MCF 10A (cell line): ENCODE measurements at regions of chr5 and their contacts with region 1.

Region 1: GRCh38 chr5:94968507-94969095 is 316.3 kb downstream of the MCTP1 start:
- DNase-seq: peak; percentile 71
- H3K4me3 Mint-ChIP-seq: no peak overlapping the region
- H3K27ac Mint-ChIP-seq: no peak overlapping the region
- H3K4me1 Mint-ChIP-seq: no peaks in the 10 kb centered on the region
- H3K27me3 Mint-ChIP-seq: no peaks in the 10 kb centered on the region
- CTCF ChIP-seq: peak; percentile 57

Region 2: GRCh38 chr5:94715671-94716211 is 252.9 kb before region 1 on chr5:
- CTCF ChIA-PET with region 1: no interaction called
- POLR2A ChIA-PET with region 1: no interaction called
- intact Hi-C with region 1: no loop called
- DNase-seq: no peak
- H3K4me3 Mint-ChIP-seq: no peak overlapping the region
- H3K27ac Mint-ChIP-seq: no peak overlapping the region
- H3K4me1 Mint-ChIP-seq: no peaks in the 10 kb centered on the region
- H3K27me3 Mint-ChIP-seq: no peaks in the 10 kb centered on the region
- CTCF ChIP-seq: no peak

Region 3: GRCh38 chr5:94884311-94884710 is 84.3 kb before region 1 on chr5:
- CTCF ChIA-PET with region 1: no interaction called
- POLR2A ChIA-PET with region 1: no interaction called
- intact Hi-C with region 1: no loop called
- DNase-seq: no peak
- H3K4me3 Mint-ChIP-seq: no peak overlapping the region
- H3K27ac Mint-ChIP-seq: no peak overlapping the region
- H3K4me1 Mint-ChIP-seq: no peaks in the 10 kb centered on the region
- H3K27me3 Mint-ChIP-seq: no peaks in the 10 kb centered on the region
- CTCF ChIP-seq: no peak

Region 4: DNA sequence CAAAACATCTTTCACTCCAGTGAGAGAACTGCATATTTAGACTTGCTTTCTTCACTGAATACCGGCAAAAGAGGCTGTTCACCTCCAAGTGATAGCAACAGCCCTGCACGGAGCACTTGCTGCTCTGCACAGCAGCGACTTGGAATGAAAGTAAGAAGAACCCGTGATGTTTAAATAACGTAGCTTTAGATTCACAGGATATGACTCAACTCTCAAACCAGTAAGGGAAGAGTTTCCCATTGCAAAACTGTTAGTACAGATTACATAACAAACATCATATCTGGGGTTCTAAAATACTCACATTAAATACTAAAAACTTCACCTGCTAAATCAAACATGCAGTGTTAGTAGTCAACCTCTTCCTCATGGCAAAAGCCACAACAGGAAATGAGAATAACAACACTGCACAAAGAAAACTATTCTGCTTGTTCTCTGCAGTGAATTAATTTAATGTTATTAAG is 112.9 kb after region 1 on chr5:
- CTCF ChIA-PET with region 1: interaction called, 4 read pairs
- POLR2A ChIA-PET with region 1: no interaction called
- intact Hi-C with region 1: loop called (anchors 2 kb)
- DNase-seq: peak; percentile 93
- H3K4me3 Mint-ChIP-seq: peak overlapping the region; percentile 76
- H3K27ac Mint-ChIP-seq: peak overlapping the region; percentile 84
- H3K4me1 Mint-ChIP-seq: peaks cover 28% of the 10 kb centered on the region
- H3K27me3 Mint-ChIP-seq: no peaks in the 10 kb centered on the region
- CTCF ChIP-seq: no peak

Region 5: GRCh38 chr5:95238560-95239325 is 270.1 kb after region 1 on chr5:
- CTCF ChIA-PET with region 1: interaction called, 117 read pairs
- POLR2A ChIA-PET with region 1: no interaction called
- intact Hi-C with region 1: loop called (anchors 1 kb)
- DNase-seq: peak; percentile 55
- H3K4me3 Mint-ChIP-seq: no peak overlapping the region
- H3K27ac Mint-ChIP-seq: no peak overlapping the region
- H3K4me1 Mint-ChIP-seq: peaks cover 6% of the 10 kb centered on the region
- H3K27me3 Mint-ChIP-seq: peaks cover 13% of the 10 kb centered on the region
- CTCF ChIP-seq: peak; percentile 43

Region 6: GRCh38 chr5:95261437-95262175 is 293.0 kb after region 1 on chr5:
- CTCF ChIA-PET with region 1: interaction called, 123 read pairs
- POLR2A ChIA-PET with region 1: interaction called, 3 read pairs
- intact Hi-C with region 1: loop called (anchors 1 kb)
- DNase-seq: peak; percentile 52
- H3K4me3 Mint-ChIP-seq: no peak overlapping the region
- H3K27ac Mint-ChIP-seq: no peak overlapping the region
- H3K4me1 Mint-ChIP-seq: no peaks in the 10 kb centered on the region
- H3K27me3 Mint-ChIP-seq: peaks cover under 1% of the 10 kb centered on the region
- CTCF ChIP-seq: peak; percentile 53

Region 7: GRCh38 chr5:95471942-95472341 is 503.3 kb after region 1 on chr5:
- CTCF ChIA-PET with region 1: no interaction called
- POLR2A ChIA-PET with region 1: no interaction called
- intact Hi-C with region 1: loop called (anchors 5 kb)
- DNase-seq: peak; percentile 1
- H3K4me3 Mint-ChIP-seq: no peak overlapping the region
- H3K27ac Mint-ChIP-seq: no peak overlapping the region
- H3K4me1 Mint-ChIP-seq: peaks cover 9% of the 10 kb centered on the region
- H3K27me3 Mint-ChIP-seq: no peaks in the 10 kb centered on the region
- CTCF ChIP-seq: no peak